Activated CD4-positive, alpha-beta memory T cell treated with anti-CD3 and anti-CD28 coated beads for 36 hours (primary cell): ENCODE measurements at regions of chr7 and their contacts with region 1.

Region 1: GRCh38 chr7:48088559-48089045 is 463 bp upstream of the UPP1 start:
- DNase-seq: no peak
- H3K4me3 Mint-ChIP-seq: peak overlapping the region; percentile 83
- H3K27ac Mint-ChIP-seq: peak overlapping the region; percentile 91
- H3K4me1 Mint-ChIP-seq: peaks cover 77% of the 10 kb centered on the region
- H3K27me3 Mint-ChIP-seq: no peaks in the 10 kb centered on the region

Region 2: DNA sequence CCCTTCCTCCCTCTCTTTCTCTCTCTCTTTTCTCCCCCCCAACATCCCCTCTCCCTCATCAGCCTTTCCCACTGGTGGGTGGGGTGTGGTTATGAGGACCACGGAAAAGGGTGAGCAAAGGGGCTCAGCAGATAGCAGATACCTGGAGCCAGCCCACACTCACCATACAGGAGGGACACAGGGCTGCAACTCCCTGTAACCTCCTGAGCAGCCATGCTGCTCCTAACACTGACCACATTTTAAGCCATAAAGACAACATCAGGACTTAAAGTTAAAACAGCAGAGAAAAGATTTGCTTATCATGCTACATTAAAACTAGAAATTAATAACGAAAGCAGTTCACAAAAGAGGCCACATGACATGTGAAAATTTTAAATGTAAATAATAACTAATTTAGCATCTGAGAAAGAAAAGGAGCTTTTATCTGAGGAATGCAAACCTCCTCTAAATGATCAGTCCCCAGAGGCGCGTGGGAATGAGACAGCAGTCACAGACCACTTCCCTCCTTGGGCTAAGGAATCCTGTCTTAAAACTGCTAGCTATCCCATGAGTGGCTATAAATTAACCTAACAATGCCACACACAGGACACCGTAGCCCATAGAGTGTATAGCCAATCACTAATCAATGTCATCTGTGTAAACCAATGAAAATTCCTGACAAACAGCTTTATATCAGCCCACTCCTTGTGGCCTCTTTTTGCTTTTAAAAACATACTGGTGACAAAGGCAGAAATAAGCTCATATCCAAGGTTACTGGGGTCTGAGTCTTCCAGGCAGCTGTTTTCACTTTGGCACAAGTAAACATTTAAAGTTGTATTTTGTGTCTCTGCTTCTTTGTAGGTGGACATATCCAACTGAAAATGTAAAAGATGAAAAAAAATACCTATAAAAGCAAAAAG is 173.6 kb before region 1 on chr7:
- CTCF ChIA-PET with region 1: no interaction called
- POLR2A ChIA-PET with region 1: no interaction called
- intact Hi-C with region 1: no loop called
- DNase-seq: no peak
- H3K4me3 Mint-ChIP-seq: no peak overlapping the region
- H3K27ac Mint-ChIP-seq: no peak overlapping the region
- H3K4me1 Mint-ChIP-seq: no peaks in the 10 kb centered on the region
- H3K27me3 Mint-ChIP-seq: no peaks in the 10 kb centered on the region

Region 3: GRCh38 chr7:47979145-47979831 is 109.3 kb before region 1 on chr7 and contains the start of gene HUS1:
- CTCF ChIA-PET with region 1: no interaction called
- POLR2A ChIA-PET with region 1: interaction called, 4 read pairs
- intact Hi-C with region 1: loop called (anchors 1 kb)
- DNase-seq: peak; percentile 96
- H3K4me3 Mint-ChIP-seq: peak within 1 kb of the TSS; percentile 84
- H3K27ac Mint-ChIP-seq: peak within 1 kb of the TSS; percentile 91
- H3K4me1 Mint-ChIP-seq: peaks cover 24% of the 10 kb centered on the region
- H3K27me3 Mint-ChIP-seq: no peaks in the 10 kb centered on the region
- total RNA-seq, gene HUS1: 38.6 to 38.9 TPM

Region 4: DNA sequence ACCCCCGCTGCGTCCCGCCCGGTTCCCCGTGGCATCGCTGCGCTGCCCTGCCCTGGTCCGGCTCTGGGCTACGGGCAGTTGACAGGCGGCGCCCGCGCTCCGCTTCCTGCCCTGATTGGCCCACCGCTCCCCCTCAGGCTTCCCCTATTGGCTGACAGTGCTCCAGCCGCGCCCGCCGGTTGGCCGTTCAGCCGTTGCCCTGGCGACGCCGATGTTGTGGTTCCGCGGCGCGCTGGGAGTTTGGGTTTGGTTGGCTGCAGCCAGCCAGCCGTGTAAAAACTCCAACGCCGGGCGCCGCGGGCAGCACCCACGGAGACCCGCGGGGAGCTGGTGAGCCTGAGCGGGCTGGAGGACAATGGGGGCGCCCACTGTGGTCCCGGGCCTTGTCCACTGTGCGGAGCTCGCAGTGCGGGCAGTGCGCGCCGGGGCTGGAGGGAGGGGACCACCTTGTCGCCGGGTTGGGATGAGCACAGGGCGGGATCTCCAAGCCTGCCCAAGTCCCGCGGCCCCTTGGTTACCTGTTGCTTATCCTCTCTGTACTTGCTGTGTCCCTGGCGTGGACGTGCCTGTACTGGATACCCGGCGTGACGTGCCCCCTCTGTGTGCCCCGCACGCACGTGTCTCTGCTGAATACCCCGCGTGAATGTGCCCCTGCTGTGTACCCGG is 53.2 kb before region 1 on chr7 and contains the start of gene C7orf57:
- CTCF ChIA-PET with region 1: interaction called, 7 read pairs
- POLR2A ChIA-PET with region 1: interaction called, 4 read pairs
- intact Hi-C with region 1: loop called (anchors 1 kb)
- DNase-seq: peak; percentile 91
- H3K4me3 Mint-ChIP-seq: peak within 1 kb of the TSS; percentile 78
- H3K27ac Mint-ChIP-seq: no peak within 1 kb of the TSS
- H3K4me1 Mint-ChIP-seq: peaks cover 9% of the 10 kb centered on the region
- H3K27me3 Mint-ChIP-seq: peaks cover 15% of the 10 kb centered on the region
- total RNA-seq, gene C7orf57: 0.71 to 0.90 TPM

Region 5: DNA sequence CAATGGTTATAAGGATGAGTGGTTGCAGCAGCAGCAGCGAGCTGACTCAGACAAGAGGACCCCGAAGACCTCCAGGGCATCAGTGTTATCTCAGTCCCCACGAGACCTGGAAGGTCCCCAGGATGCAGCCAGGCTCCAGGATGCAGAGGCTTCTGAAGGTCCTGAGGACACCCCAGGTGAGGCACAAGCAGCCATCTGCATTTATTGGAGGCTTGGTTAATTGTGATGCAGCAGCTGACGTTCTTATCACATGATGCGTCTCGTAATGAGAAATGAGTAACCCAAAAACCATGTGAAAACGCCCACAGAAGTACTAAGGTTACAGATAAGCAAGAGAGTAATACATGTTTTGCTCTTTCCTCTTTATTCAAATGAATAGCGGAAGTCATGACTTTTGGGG is 35.9 kb before region 1 on chr7:
- CTCF ChIA-PET with region 1: interaction called, 3 read pairs
- POLR2A ChIA-PET with region 1: interaction called, 3 read pairs
- intact Hi-C with region 1: loop called (anchors 1 kb)
- DNase-seq: peak; percentile 39
- H3K4me3 Mint-ChIP-seq: no peak overlapping the region
- H3K27ac Mint-ChIP-seq: no peak overlapping the region
- H3K4me1 Mint-ChIP-seq: peaks cover 11% of the 10 kb centered on the region
- H3K27me3 Mint-ChIP-seq: no peaks in the 10 kb centered on the region

Region 6: GRCh38 chr7:48109848-48110663 is 21.5 kb after region 1 on chr7:
- CTCF ChIA-PET with region 1: interaction called, 22 read pairs
- POLR2A ChIA-PET with region 1: no interaction called
- intact Hi-C with region 1: loop called (anchors 1 kb)
- DNase-seq: peak; percentile 93
- H3K4me3 Mint-ChIP-seq: no peak overlapping the region
- H3K27ac Mint-ChIP-seq: peak overlapping the region; percentile 34
- H3K4me1 Mint-ChIP-seq: peaks cover 11% of the 10 kb centered on the region
- H3K27me3 Mint-ChIP-seq: no peaks in the 10 kb centered on the region

Region 7: DNA sequence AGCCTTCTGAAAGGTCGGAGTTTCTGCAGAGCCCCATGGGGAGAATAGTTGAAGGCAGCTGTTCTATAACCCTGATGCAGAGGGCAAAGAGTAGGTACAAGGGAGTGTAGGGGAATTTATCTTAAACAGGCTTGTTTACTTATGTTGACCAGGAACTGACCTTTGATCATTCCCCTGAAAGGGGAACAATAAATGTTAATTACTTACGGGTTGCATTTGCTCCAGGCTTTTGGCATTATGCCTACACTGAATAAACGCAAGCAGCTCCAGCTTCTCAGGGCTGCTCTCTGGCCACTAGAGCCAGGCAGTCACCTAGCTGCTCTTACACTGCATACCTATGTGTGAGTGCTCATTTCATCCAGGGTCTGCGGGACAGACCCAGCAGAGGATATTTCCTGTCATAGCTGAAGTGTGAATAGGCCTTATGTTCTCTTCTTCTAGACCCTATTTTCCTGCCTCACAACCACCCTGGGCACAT is 55.7 kb after region 1 on chr7:
- CTCF ChIA-PET with region 1: no interaction called
- POLR2A ChIA-PET with region 1: no interaction called
- intact Hi-C with region 1: no loop called
- DNase-seq: no peak
- H3K4me3 Mint-ChIP-seq: no peak overlapping the region
- H3K27ac Mint-ChIP-seq: no peak overlapping the region
- H3K4me1 Mint-ChIP-seq: peaks cover 8% of the 10 kb centered on the region
- H3K27me3 Mint-ChIP-seq: peaks cover 5% of the 10 kb centered on the region